Activated CD4-positive, alpha-beta memory T cell treated with anti-CD3 and anti-CD28 coated beads, Interleukin-2, amount 10 ng/mL, durations not matched to agents 7 days and 5 days (primary cell): ENCODE measurements at regions of chr13 and their contacts with region 1.

Region 1: DNA sequence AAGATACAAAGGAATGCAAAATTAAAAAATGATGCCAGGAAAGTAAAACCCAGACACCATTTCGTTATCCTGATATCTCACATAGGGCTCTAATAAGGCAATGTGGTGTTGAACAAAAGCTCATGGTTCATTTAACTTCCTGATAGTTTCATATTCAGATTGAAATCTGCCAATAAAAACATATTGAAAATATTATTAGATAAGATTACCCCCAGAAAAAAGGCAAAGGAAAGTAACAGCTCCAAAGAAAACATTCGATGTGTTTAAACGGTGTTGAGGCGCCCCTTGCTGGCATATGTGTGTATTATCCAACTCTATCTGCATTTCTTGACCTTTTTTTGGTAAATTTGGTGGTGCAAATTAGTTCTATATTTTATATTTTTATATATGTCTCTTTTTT is 75.9 kb downstream of the ESD start:
- DNase-seq: peak; percentile 43
- H3K4me3 Mint-ChIP-seq: no peak overlapping the region
- H3K27ac Mint-ChIP-seq: no peak overlapping the region
- H3K4me1 Mint-ChIP-seq: peaks cover 4% of the 10 kb centered on the region
- H3K27me3 Mint-ChIP-seq: no peaks in the 10 kb centered on the region

Region 2: DNA sequence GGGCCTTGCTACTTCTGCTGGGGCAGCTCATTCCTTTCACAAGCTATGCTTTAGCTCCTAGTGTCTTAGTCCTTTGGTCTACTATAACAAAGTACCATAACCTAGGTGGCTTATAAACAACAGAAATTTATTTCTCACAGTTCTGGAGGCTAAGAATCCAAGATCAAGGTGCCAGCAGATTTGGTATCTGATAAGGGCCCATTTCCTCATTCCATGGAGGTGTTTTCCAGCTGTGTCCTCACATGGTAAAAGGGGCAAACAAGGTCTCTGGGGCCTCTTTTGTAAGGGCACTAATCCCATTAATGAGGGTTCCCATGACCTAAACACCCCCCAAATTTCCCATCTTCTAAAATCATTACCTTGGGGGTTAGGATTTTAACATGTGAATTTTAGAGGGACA is 226.0 kb before region 1 on chr13:
- CTCF ChIA-PET with region 1: interaction called, 10 read pairs
- POLR2A ChIA-PET with region 1: no interaction called
- DNase-seq: no peak
- H3K4me3 Mint-ChIP-seq: no peak overlapping the region
- H3K27ac Mint-ChIP-seq: no peak overlapping the region
- H3K4me1 Mint-ChIP-seq: peaks cover under 1% of the 10 kb centered on the region
- H3K27me3 Mint-ChIP-seq: peaks cover 8% of the 10 kb centered on the region

Region 3: GRCh38 chr13:46655377-46656180 is 65.5 kb before region 1 on chr13:
- CTCF ChIA-PET with region 1: no interaction called
- POLR2A ChIA-PET with region 1: no interaction called
- DNase-seq: no peak
- H3K4me3 Mint-ChIP-seq: no peak overlapping the region
- H3K27ac Mint-ChIP-seq: no peak overlapping the region
- H3K4me1 Mint-ChIP-seq: peaks cover 13% of the 10 kb centered on the region
- H3K27me3 Mint-ChIP-seq: no peaks in the 10 kb centered on the region

Region 4: GRCh38 chr13:46698910-46699460 is 22.1 kb before region 1 on chr13:
- CTCF ChIA-PET with region 1: no interaction called
- POLR2A ChIA-PET with region 1: no interaction called
- DNase-seq: no peak
- H3K4me3 Mint-ChIP-seq: no peak overlapping the region
- H3K27ac Mint-ChIP-seq: no peak overlapping the region
- H3K4me1 Mint-ChIP-seq: no peaks in the 10 kb centered on the region
- H3K27me3 Mint-ChIP-seq: no peaks in the 10 kb centered on the region